GM10248 (cell line): ENCODE measurements at regions of chr6 and their contacts with region 1.

Region 1: GRCh38 chr6:118864341-118865099 is 29.4 kb upstream of the ASF1A start:
- DNase-seq: no peak
- CTCF ChIP-seq: no peak

Region 2: GRCh38 chr6:118853408-118853807 is 11.1 kb before region 1 on chr6:
- CTCF ChIA-PET with region 1: interaction called, 10 read pairs
- POLR2A ChIA-PET with region 1: no interaction called
- DNase-seq: no peak
- CTCF ChIP-seq: no peak

Region 3: DNA sequence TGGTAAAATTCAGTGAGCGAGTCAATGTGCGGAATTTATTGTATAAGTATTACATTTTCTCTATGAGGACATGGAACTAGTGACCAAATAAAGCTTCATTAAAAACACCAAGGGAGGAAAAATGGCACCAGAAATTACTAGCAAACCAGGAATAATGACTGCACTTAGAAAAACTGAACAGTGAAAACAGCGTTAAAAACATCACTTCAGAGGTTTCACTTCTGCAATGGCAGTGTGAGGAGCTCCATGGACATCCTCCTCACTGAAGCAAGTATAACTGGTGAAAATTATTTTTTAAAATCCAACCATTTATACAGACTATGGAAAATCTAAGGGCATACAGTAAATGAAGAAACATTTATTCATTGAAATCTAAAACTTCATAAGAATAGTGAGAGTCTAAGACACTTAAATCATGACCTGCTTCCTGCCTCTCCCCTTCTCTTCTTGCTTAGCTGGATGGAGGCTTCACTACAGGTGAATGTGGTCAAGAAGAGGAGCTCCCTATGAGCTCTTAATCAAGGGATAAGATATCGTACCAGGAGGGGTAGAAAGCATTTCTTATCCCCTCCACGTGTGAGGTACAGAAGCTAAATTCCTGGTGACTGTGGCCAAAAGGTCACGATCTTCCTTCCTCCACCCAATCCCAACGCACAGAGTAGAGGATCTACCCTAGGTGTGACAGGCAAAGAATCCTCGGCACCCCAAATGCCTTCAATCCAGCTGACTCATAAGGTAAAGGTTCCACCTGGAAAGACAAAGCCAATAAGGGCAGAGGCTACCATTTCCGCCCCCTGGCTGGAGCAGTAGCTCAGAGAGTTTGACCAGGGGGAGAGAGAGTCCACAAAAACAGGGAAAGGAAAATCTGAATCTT is 17.2 kb after region 1 on chr6:
- CTCF ChIA-PET with region 1: interaction called, 13 read pairs
- POLR2A ChIA-PET with region 1: no interaction called
- DNase-seq: peak; percentile 30
- CTCF ChIP-seq: no peak